ENCODE measurements at regions of chr1 and their contacts with region 1.

Region 1: DNA sequence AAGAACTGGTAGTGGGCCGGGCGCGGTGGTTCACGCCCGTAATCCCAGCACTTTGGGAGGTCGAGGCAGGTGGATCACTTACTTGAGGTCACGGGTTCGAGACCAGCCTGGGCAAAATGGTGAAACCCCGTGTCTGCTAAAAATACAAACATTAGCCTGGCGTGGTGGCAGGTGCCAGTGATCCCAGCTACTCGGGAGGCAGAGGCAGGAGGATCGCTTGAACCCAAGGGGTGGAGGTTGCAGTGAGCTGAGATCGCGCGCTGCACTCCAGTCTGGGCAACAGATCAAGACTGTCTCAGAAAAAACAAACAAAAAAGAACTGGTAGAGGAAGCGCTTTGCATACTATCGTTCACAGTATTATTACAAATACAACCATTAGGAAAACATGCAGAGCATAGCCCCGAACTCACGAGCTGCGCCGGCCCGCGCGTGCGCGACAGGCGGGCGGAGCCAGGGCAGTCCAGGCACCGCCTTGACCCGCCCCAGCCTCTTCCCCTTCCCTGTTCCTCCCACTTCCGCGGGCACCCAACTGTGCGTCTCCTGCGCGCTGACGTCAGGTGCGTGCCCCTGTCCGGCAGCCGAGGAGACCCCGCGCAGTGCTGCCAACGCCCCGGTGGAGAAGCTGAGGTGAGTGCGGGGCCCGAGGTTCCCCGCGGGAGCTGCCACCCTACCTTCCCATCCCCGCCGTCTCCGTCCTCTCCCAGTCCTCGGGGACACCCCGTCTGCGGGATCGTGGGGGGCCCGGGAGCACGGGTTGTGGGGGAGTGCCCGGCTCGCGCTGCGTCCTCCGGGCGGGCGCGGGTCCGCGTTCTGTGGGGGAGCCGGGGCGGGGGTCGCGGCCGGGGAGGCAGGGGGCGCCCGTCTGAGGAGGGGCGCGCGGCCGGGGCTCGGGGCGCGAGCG is at the start of gene CDC42:
- DNase-seq: peak; percentile 97 to 98 (median 98)
- H3K4me3 ChIP-seq: peak within 1 kb of the TSS; percentile 78 to 97 (median 88)
- H3K27ac ChIP-seq: peak within 1 kb of the TSS; percentile 94 to 97
- H3K4me1 ChIP-seq: peaks cover 16 to 43% (median 33%) of the 10 kb centered on the region in 4 experiments
- H3K27me3 ChIP-seq: no peaks in the 10 kb centered on the region

Region 2: DNA sequence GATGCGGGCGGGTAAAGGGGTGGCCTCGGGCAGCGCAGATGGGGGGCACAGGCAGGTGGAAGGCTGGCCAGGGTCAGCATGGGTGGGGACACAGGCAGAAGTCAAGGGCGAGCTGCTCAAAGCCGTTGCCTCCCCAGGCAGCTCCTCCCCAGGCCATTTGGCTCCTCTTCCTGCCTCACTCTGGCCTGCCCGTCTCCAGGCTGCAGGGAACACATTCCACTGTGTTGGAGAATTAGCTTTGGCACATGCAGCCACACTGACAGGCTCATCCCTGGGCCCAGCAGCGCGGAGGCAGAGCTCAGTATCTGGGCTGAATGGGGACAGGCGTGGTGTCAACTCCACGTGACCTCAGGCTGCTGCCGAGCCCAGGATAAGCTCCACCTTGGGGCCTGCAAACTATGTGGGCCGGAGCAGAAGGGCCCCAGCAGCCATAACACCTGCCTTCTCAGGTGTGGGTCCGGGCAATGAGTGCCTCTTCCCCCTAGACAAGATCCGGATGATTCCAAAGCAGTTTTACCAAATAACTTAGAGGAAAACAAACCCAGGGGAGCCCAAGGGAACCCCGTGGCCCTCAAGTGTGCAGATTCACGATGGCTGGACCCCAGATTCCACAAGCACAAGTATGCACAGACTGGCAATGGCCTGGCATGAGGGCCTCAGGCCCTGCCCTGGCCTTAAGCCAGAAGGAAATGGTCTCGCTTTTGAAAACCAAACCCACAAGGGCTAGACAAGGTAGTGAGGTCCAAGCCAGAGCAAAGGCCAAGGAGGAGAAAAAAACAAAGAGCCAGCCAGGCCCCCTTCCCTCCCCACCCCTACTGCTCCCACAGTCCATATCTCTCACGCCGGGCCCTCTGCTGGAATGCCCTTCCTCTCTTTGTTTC is 155.5 kb before region 1 on chr1:
- CTCF ChIA-PET with region 1: no interaction called
- POLR2A ChIA-PET with region 1: no interaction called
- DNase-seq: no peak
- H3K4me3 ChIP-seq: no peak overlapping the region
- H3K27ac ChIP-seq: no peak overlapping the region
- H3K4me1 ChIP-seq: peaks cover 0 to 33% (median 22%) of the 10 kb centered on the region in 4 experiments
- H3K27me3 ChIP-seq: no peaks in the 10 kb centered on the region

Region 3: GRCh38 chr1:22025368-22026155 is 26.8 kb before region 1 on chr1:
- CTCF ChIA-PET with region 1: interaction called, 8 read pairs
- POLR2A ChIA-PET with region 1: interaction called, 42 read pairs
- DNase-seq: peak; percentile 88 to 96 (median 96)
- H3K4me3 ChIP-seq: peak overlapping the region; percentile 80 to 100 (median 96)
- H3K27ac ChIP-seq: peak overlapping the region; percentile 94 to 98
- H3K4me1 ChIP-seq: peaks cover 0 to 44% (median 26%) of the 10 kb centered on the region in 4 experiments
- H3K27me3 ChIP-seq: no peaks in the 10 kb centered on the region

Measured in common myeloid progenitor, CD34-positive (primary cell).